Dendritic cell treated with granulocyte-macrophage colony-stimulating factor and Interleukin-4, amounts not matched to agents 40 ng/mL and 50 ng/mL, for 4 days (primary cell): ENCODE measurements at regions of chr2 and their contacts with region 1.

Region 1: GRCh38 chr2:47767880-47768609 is 14.9 kb upstream of the MSH6 start:
- H3K4me3 Mint-ChIP-seq: peak overlapping the region; percentile 6
- H3K27ac Mint-ChIP-seq: no peak overlapping the region
- H3K4me1 Mint-ChIP-seq: peaks cover 17% of the 10 kb centered on the region
- H3K27me3 Mint-ChIP-seq: peaks cover 10% of the 10 kb centered on the region

Region 2: DNA sequence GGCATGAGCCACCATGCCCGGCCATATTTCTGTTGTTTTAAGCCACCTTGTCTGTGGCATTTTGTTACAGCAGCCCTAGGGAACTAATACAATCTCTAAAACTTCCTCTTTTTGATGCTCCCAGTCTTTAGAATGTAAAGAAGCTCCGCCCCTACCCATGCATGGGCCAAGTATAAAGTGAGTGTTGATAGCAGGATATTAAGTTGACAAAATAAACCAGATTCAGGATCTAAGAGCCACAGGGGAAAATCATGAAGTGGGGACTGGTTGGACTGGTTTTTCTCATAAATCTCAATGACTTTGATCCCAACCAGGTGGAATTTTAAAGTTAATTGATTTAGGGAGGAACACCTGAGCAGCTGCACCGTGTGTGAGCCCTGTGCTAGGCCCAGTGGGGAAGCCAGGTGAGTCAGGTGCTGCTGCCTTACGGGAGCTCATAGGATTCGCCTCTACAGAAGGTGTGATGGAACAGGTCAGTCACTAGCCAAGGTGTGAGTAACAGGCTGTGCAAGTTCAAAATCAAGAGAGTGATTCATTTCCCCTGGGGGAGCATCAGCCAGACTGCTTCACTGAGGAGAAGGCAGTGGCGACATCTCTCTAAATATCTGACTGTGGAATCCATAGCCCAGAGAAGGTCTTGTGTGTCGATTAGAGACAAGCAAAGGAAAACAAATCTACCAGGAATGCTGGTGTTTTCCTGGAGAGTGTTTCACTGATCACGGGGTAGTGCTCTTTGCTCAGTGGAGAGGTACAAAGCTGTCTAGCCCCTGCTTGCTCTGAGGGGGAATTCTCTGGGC is 428.1 kb before region 1 on chr2:
- intact Hi-C with region 1: loop called (anchors 5 kb)
- H3K4me3 Mint-ChIP-seq: no peak overlapping the region
- H3K27ac Mint-ChIP-seq: no peak overlapping the region
- H3K4me1 Mint-ChIP-seq: peaks cover 24% of the 10 kb centered on the region
- H3K27me3 Mint-ChIP-seq: peaks cover 12% of the 10 kb centered on the region

Region 3: DNA sequence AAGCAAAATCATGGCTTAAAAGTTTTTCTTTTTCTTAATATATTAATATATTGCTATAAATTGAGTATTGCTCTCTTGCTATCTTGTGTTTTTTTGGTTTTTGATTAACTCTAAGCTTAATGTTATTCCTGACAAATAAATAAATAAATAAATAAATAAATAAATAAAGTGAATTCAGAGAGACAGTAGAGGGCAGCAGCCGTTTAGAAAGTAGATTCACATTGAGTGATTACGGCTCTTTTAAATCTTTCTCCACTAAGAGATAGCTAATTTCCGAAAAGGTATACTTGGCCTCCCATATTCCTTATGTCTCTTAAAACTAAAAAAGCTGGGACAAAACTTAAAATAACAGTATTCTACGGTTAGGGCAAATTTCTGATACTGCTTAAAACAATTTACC is 330.8 kb before region 1 on chr2:
- intact Hi-C with region 1: loop called (anchors 2 kb)
- H3K4me3 Mint-ChIP-seq: no peak overlapping the region
- H3K27ac Mint-ChIP-seq: no peak overlapping the region
- H3K4me1 Mint-ChIP-seq: no peaks in the 10 kb centered on the region
- H3K27me3 Mint-ChIP-seq: no peaks in the 10 kb centered on the region